ENCODE measurements at regions of chr7 and their contacts with region 1.

Region 1: GRCh38 chr7:27784393-27785053 is 44.6 kb downstream of the TAX1BP1 start:
- DNase-seq: peak; percentile 67
- H3K4me3 Mint-ChIP-seq: no peak overlapping the region
- H3K27ac Mint-ChIP-seq: peak overlapping the region; percentile 59
- H3K4me1 Mint-ChIP-seq: peaks cover 13% of the 10 kb centered on the region
- H3K27me3 Mint-ChIP-seq: no peaks in the 10 kb centered on the region
- CTCF ChIP-seq: peak; percentile 45

Region 2: DNA sequence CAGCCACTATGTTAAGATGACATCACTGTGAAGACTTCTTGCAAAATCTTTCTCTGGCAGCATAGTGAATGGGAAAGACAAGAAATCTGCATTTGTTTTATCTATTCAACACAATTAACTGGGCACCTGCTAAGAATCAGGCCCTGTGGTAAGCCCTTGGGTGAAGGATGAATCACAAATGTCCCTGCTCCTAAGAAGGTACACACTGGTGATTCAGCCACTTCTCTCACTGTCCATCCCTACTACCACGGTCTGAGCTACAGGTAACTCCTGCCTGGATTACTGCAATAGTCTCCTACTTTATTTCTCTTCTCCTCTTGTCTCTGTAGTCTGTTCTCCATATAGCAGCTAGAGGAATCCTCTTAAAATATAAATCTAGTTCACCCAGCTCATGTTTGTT is 237.9 kb before region 1 on chr7:
- CTCF ChIA-PET with region 1: no interaction called
- POLR2A ChIA-PET with region 1: no interaction called
- intact Hi-C with region 1: no loop called
- DNase-seq: peak; percentile 28
- H3K4me3 Mint-ChIP-seq: no peak overlapping the region
- H3K27ac Mint-ChIP-seq: no peak overlapping the region
- H3K4me1 Mint-ChIP-seq: peaks cover 11% of the 10 kb centered on the region
- H3K27me3 Mint-ChIP-seq: no peaks in the 10 kb centered on the region
- CTCF ChIP-seq: no peak

Region 3: GRCh38 chr7:27745064-27745583 is 39.4 kb before region 1 on chr7:
- CTCF ChIA-PET with region 1: interaction called, 10 read pairs
- POLR2A ChIA-PET with region 1: interaction called, 9 read pairs
- intact Hi-C with region 1: no loop called
- DNase-seq: peak; percentile 62
- H3K4me3 Mint-ChIP-seq: no peak overlapping the region
- H3K27ac Mint-ChIP-seq: peak overlapping the region; percentile 77
- H3K4me1 Mint-ChIP-seq: peaks cover 32% of the 10 kb centered on the region
- H3K27me3 Mint-ChIP-seq: no peaks in the 10 kb centered on the region
- CTCF ChIP-seq: peak; percentile 63

Region 4: DNA sequence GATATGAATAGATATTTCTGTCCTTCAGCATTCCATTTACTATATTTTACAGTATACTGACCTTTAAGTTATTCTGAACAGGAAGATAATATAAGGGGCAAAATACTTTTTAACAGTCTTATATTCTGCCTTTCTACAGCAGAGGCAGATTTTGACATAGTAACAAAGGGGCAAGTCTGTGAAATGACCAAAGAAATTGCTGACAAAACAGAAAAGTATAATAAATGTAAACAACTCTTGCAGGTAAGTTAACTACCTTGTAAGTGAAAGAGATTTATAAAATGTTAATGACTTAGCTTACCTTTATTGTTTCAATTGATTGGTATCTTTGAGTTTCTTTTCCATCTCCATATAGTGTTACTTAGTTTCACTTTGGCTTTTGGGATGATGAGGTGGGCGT is 11.5 kb after region 1 on chr7:
- CTCF ChIA-PET with region 1: interaction called, 10 read pairs
- POLR2A ChIA-PET with region 1: interaction called, 3 read pairs
- intact Hi-C with region 1: no loop called
- DNase-seq: no peak
- H3K4me3 Mint-ChIP-seq: no peak overlapping the region
- H3K27ac Mint-ChIP-seq: no peak overlapping the region
- H3K4me1 Mint-ChIP-seq: peaks cover 6% of the 10 kb centered on the region
- H3K27me3 Mint-ChIP-seq: no peaks in the 10 kb centered on the region
- CTCF ChIP-seq: no peak

Region 5: GRCh38 chr7:28096713-28097112 is 312.2 kb after region 1 on chr7:
- CTCF ChIA-PET with region 1: interaction called, 5 read pairs
- POLR2A ChIA-PET with region 1: no interaction called
- intact Hi-C with region 1: loop called (anchors 10 kb)
- DNase-seq: peak; percentile 69
- H3K4me3 Mint-ChIP-seq: no peak overlapping the region
- H3K27ac Mint-ChIP-seq: no peak overlapping the region
- H3K4me1 Mint-ChIP-seq: no peaks in the 10 kb centered on the region
- H3K27me3 Mint-ChIP-seq: no peaks in the 10 kb centered on the region
- CTCF ChIP-seq: peak; percentile 70